ENCODE measurements at regions of chr2 and their contacts with region 1.

Region 1: DNA sequence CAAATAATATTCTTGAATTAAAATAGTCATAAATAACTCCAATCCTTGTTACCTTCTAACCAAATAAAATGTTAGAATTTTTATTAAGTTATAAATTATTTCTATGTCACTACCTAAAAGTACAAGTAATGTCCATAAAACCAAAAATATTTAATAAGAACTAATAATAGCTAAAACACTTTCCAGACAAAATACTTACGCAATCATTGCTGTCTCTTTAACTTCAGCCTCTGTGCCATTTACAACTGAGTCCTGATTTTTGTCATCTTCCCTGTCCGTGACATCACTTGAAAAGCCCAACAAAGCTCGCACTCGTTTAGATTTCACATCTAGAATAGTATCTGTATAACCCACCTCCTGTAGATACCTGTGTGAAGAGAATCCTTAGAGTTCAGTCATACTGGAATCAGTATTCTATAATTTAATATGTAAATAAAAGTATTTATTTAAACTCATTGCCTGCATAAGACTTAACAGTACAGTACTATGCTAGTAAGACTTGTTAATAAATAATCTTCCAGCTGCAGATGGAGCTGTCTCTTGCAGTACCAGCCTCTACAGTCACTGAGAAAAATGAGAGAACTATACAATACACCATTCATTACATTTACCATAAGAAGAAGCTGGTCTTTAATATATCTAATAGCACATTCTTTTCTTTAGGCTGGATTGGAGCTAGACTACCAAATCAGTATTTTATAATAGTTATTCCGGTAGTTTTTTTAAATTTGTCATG is 63.8 kb downstream of the STRN start:
- DNase-seq: no peak
- H3K4me3 ChIP-seq: no peak overlapping the region
- H3K27ac ChIP-seq: no peak overlapping the region
- H3K4me1 ChIP-seq: no peaks in the 10 kb centered on the region
- H3K27me3 ChIP-seq: no peaks in the 10 kb centered on the region
- CTCF ChIP-seq: no peak

Region 2: DNA sequence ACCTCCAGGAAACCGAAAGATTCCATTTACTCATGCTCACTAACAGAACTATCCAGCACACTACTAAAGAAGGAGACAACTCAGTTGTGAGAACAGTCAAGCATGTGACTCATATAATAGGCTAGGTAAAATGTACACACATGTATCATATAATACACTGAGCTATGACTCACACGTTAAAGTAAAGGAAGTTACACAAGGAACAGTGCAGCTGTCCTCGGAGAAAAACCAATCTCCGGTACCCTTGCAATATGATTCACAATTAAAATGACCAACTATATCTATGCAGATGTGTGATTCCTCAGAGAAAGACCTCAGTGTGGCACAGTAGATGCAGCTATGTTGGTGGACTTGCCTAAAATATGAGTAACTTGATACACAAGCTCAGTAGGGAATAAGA is 12.8 kb before region 1 on chr2:
- CTCF ChIA-PET with region 1: no interaction called
- POLR2A ChIA-PET with region 1: interaction called, 11 read pairs
- intact Hi-C with region 1: no loop called
- DNase-seq: peak; percentile 22 to 98
- H3K4me3 ChIP-seq: peak overlapping the region; percentile 34; the same call in 1 of the 2 replicates
- H3K27ac ChIP-seq: peak overlapping the region; percentile 68
- H3K4me1 ChIP-seq: peaks cover 12% of the 10 kb centered on the region
- H3K27me3 ChIP-seq: no peaks in the 10 kb centered on the region
- CTCF ChIP-seq: no peak

Region 3: GRCh38 chr2:36921984-36922383 is 19.4 kb after region 1 on chr2:
- CTCF ChIA-PET with region 1: no interaction called
- POLR2A ChIA-PET with region 1: no interaction called
- intact Hi-C with region 1: no loop called
- DNase-seq: no peak
- H3K4me3 ChIP-seq: no peak overlapping the region
- H3K27ac ChIP-seq: no peak overlapping the region
- H3K4me1 ChIP-seq: peaks cover 8% of the 10 kb centered on the region; the same call in 1 of the 2 replicates
- H3K27me3 ChIP-seq: no peaks in the 10 kb centered on the region
- CTCF ChIP-seq: no peak

Region 4: GRCh38 chr2:37005118-37005868 is 102.7 kb after region 1 on chr2:
- CTCF ChIA-PET with region 1: no interaction called
- POLR2A ChIA-PET with region 1: no interaction called
- intact Hi-C with region 1: loop called (anchors 10 kb)
- DNase-seq: no peak
- H3K4me3 ChIP-seq: no peak overlapping the region
- H3K27ac ChIP-seq: no peak overlapping the region
- H3K4me1 ChIP-seq: peaks cover 16% of the 10 kb centered on the region
- H3K27me3 ChIP-seq: no peaks in the 10 kb centered on the region
- CTCF ChIP-seq: no peak

Measured in PC-9 (cell line).